CD8-positive, alpha-beta T cell (primary cell): ENCODE measurements at regions of chr4 and their contacts with region 1.

Region 1: GRCh38 chr4:89024051-89024675 is 32.8 kb downstream of the FAM13A start:
- DNase-seq: peak; percentile 5 to 82 (median 46)
- ATAC-seq: peak; percentile 100
- H3K4me3 ChIP-seq: no peak overlapping the region
- H3K4me3 Mint-ChIP-seq: no peak overlapping the region
- H3K27ac ChIP-seq: no peak overlapping the region
- H3K27ac Mint-ChIP-seq: no peak overlapping the region
- H3K4me1 ChIP-seq: no peaks in the 10 kb centered on the region
- H3K4me1 Mint-ChIP-seq: no peaks in the 10 kb centered on the region
- H3K27me3 ChIP-seq: no peaks in the 10 kb centered on the region
- H3K27me3 Mint-ChIP-seq: peaks cover 10% of the 10 kb centered on the region
- CTCF ChIP-seq: peak; percentile 87

Region 2: GRCh38 chr4:88217920-88218319 is 806.2 kb before region 1 on chr4:
- CTCF ChIA-PET with region 1: interaction called, 3 read pairs
- POLR2A ChIA-PET with region 1: no interaction called
- intact Hi-C with region 1: loop called (anchors 2 to 5 kb)
- DNase-seq: no peak
- ATAC-seq: no peak
- H3K4me3 ChIP-seq: no peak overlapping the region
- H3K4me3 Mint-ChIP-seq: no peak overlapping the region
- H3K27ac ChIP-seq: no peak overlapping the region
- H3K27ac Mint-ChIP-seq: no peak overlapping the region
- H3K4me1 ChIP-seq: no peaks in the 10 kb centered on the region
- H3K4me1 Mint-ChIP-seq: peaks cover 6% of the 10 kb centered on the region
- H3K27me3 ChIP-seq: no peaks in the 10 kb centered on the region
- H3K27me3 Mint-ChIP-seq: peaks cover 8% of the 10 kb centered on the region
- CTCF ChIP-seq: no peak

Region 3: DNA sequence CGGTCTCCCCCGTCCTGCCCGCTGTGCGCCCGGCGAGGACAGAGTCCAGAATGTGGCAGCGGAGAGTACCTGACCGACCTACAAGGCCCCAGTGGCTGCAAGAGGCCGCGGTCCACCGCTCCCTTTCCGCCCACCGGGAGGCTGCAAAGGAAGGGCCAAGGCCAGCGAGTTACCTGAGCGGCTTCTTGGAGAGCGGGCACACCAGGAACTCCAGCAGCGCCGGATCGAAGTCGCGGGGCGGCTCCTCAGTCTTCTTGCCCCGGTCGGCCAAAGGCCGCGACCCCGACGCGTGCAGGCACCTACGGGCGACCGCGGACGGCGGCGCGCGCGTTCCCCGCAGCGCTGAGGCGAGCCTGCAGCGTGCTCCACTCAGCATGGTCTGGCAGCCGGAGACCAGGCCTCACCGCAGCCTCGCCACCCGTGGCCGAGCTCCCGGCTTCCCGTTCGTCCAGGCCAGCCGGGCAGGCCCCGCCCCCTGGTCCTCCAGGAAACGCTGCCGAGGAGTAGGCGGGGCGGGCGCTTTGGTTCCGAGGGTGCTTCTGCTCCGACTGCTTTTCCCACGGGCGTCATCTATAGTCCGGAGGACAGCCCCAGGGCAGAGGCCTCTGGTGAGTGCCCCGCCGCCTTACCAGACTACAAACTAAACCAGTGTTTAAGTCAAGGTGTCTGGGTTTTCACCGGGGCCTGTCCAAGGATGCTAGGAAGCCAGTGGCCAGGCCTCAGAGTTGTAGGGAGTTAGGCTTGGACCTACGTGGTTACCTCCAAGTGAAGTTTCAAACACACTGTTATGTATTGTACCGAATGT is 500.6 kb before region 1 on chr4 and contains the start of gene PYURF:
- CTCF ChIA-PET with region 1: interaction called, 41 read pairs
- POLR2A ChIA-PET with region 1: interaction called, 3 read pairs
- intact Hi-C with region 1: loop called (anchors 1 to 5 kb)
- DNase-seq: peak; percentile 31 to 87 (median 75)
- ATAC-seq: peak; percentile 76
- H3K4me3 ChIP-seq: peak within 1 kb of the TSS; percentile 78 to 90
- H3K4me3 Mint-ChIP-seq: peak within 1 kb of the TSS; percentile 93
- H3K27ac ChIP-seq: peak within 1 kb of the TSS; percentile 54 to 76
- H3K27ac Mint-ChIP-seq: peak within 1 kb of the TSS; percentile 94
- H3K4me1 ChIP-seq: peaks cover 16% of the 10 kb centered on the region
- H3K4me1 Mint-ChIP-seq: peaks cover 43% of the 10 kb centered on the region
- H3K27me3 ChIP-seq: no peaks in the 10 kb centered on the region
- H3K27me3 Mint-ChIP-seq: no peaks in the 10 kb centered on the region
- CTCF ChIP-seq: no peak
- total RNA-seq, gene PYURF: 25.5 to 27.6 TPM

Region 4: DNA sequence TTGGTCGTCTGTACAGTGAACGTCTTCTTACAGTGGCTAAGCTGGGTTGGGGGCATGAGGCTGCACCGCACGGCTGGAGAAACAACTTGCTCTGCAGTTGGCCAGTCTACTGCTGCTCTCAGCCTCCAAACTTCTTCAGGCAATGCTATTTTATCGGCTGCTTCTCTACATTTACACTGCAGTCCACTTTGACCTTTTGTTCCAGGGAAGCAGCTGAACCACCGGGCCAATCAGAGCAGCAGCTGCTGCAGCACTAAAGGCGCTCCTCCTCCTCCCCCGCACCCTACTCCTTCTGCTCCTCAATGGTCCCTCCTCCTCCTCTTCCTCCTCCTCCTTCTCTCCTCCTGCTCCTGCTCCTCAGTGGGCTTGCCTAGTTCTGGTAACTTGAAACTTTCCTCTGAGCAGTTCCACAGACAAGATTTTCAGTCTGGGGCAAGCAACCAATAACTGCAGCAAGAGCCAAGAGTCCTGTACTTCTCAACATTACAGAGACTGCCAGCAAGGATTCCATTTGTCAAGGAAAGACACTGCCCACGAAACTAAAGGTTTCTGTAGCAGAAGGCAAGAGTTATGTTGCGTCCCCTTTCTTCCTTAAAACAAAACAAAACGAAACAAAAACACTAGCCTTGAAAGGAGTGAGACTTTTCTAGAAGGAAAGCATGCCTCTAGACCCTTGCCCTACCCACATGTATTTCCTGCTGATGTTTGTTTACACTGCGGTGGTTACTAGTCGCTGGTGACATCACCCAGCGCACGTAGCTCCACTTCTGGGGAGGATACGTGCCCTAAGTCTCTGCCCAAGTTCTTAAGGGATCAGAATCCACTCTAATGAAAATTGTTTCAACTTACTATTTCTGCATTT is 200.9 kb before region 1 on chr4:
- CTCF ChIA-PET with region 1: interaction called, 141 read pairs
- POLR2A ChIA-PET with region 1: interaction called, 3 read pairs
- intact Hi-C with region 1: loop called (anchors 1 kb)
- DNase-seq: peak; percentile 36 to 94 (median 61)
- ATAC-seq: peak; percentile 95
- H3K4me3 ChIP-seq: peak overlapping the region; percentile 42 to 51
- H3K4me3 Mint-ChIP-seq: peak overlapping the region; percentile 93
- H3K27ac ChIP-seq: peak overlapping the region; percentile 52 to 83
- H3K27ac Mint-ChIP-seq: peak overlapping the region; percentile 94
- H3K4me1 ChIP-seq: peaks cover 5% of the 10 kb centered on the region
- H3K4me1 Mint-ChIP-seq: peaks cover 29% of the 10 kb centered on the region
- H3K27me3 ChIP-seq: peaks cover 0 to 2% of the 10 kb centered on the region in 2 experiments
- H3K27me3 Mint-ChIP-seq: no peaks in the 10 kb centered on the region
- CTCF ChIP-seq: no peak

Region 5: DNA sequence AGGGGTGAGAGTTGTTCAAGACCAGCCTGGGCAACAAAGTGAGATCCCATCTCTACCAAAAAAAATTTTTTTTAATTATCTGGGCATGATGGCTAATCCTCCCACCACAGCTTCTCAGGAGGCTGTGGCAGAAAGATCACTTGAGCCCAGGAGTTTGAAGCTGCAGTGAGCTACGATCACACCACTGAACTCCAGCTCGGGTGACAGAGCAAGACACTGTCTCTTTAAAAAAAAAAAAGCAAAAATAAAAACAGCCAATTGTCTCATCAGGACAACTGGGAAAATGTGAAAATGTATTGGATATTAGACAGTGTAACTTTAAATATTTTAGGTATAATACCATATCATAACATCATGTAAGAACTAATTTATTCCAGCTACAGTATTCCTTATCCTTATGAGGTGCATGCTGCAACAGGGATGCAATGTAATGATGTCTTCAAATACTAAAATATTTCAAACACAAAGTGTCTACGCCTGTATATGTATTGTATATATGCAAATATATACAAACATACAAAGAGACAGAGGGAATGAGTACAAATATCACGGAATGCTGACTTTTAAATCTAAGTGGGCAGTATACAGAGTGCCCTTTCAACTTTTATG is 15.7 kb after region 1 on chr4:
- CTCF ChIA-PET with region 1: interaction called, 11 read pairs
- POLR2A ChIA-PET with region 1: no interaction called
- intact Hi-C with region 1: no loop called
- DNase-seq: no peak
- ATAC-seq: no peak
- H3K4me3 ChIP-seq: no peak overlapping the region
- H3K4me3 Mint-ChIP-seq: no peak overlapping the region
- H3K27ac ChIP-seq: no peak overlapping the region
- H3K27ac Mint-ChIP-seq: no peak overlapping the region
- H3K4me1 ChIP-seq: no peaks in the 10 kb centered on the region
- H3K4me1 Mint-ChIP-seq: no peaks in the 10 kb centered on the region
- H3K27me3 ChIP-seq: no peaks in the 10 kb centered on the region
- H3K27me3 Mint-ChIP-seq: no peaks in the 10 kb centered on the region
- CTCF ChIP-seq: no peak

Region 6: GRCh38 chr4:89356086-89356485 is 331.9 kb after region 1 on chr4:
- CTCF ChIA-PET with region 1: no interaction called
- POLR2A ChIA-PET with region 1: no interaction called
- intact Hi-C with region 1: no loop called
- DNase-seq: no peak
- ATAC-seq: no peak
- H3K4me3 ChIP-seq: no peak overlapping the region
- H3K4me3 Mint-ChIP-seq: no peak overlapping the region
- H3K27ac ChIP-seq: no peak overlapping the region
- H3K27ac Mint-ChIP-seq: no peak overlapping the region
- H3K4me1 ChIP-seq: no peaks in the 10 kb centered on the region
- H3K4me1 Mint-ChIP-seq: no peaks in the 10 kb centered on the region
- H3K27me3 ChIP-seq: no peaks in the 10 kb centered on the region
- H3K27me3 Mint-ChIP-seq: no peaks in the 10 kb centered on the region
- CTCF ChIP-seq: no peak